Testis (tissue), 5 donors: ENCODE measurements at regions of chr6 and their contacts with region 1.

Region 1: DNA sequence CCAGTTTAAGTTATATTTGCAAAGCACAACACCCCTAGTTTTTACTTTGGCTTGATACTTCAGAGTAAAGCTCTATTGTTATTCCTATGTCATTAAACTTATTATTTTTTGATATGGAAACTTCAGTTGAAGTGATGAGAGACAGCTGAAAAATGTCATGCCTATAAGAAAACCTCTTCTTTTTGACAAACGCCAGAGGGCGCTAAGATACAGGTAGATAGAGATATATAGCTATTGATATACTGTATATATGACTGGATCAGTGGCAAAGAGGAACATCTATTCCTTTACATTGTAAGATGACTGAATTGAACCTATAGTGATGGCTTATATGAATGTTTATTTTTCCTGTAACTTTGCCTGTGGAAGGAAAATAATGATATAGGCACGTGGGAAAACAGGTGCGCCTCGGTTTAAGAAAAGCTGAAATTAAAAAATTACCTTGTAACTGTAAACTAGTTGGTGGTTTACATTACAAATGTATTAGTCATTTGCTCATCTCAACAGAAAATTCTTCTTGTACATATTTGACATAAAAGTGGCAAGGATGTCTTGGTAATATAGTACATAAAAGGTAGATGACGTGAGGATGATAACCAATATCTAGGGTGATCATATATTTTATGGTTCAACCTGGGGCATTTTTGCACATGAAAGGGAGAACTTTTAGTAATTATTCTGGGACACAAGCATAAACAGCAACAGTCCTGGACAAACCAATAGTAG is 74.1 kb downstream of the LAMA4 start:
- DNase-seq: peak; percentile 27
- H3K4me3 ChIP-seq: no peak overlapping the region
- H3K27ac ChIP-seq: no peak overlapping the region
- H3K4me1 ChIP-seq: no peaks in the 10 kb centered on the region
- H3K27me3 ChIP-seq: no peaks in the 10 kb centered on the region
- CTCF ChIP-seq: peak; percentile 46 to 57 (median 54)
- POLR2A ChIP-seq: no peak

Region 2: DNA sequence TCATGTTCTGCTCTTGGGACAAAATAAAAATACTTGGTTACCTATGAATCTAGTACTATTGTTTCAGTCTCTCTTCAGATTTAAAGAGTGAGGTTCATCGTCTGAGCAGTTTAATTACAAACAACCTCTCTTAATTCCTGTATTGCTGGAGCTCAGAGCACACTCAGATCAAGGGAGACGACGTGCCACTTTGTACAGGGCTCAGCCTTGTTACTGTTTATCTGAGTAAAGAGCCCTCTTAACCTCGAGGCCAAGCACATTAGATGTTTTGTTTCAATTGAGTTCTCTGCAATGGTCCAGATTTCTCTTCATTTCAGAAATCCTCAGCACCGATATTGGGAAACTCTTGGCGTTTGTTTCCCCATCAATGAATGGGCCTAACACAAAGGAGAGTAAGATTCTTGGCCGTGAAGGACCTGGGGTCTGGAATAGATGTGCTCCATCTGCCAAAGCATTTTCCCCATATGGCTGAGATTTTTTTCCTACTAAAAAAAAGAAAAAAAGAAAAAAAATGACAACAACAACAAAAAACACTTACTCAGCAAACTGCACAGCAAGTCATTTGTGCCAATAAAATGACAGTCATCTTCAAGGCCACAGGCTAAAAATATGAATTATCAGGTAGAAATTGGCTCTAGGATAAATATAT is 209.0 kb before region 1 on chr6:
- intact Hi-C with region 1: no loop called
- DNase-seq: peak; percentile 21
- H3K4me3 ChIP-seq: no peak overlapping the region
- H3K27ac ChIP-seq: no peak overlapping the region
- H3K4me1 ChIP-seq: peaks cover 7% of the 10 kb centered on the region
- H3K27me3 ChIP-seq: no peaks in the 10 kb centered on the region
- CTCF ChIP-seq: no peak
- POLR2A ChIP-seq: no peak

Region 3: GRCh38 chr6:112296122-112296521 is 115.9 kb after region 1 on chr6:
- intact Hi-C with region 1: loop called (anchors 10 kb)
- DNase-seq: peak; percentile 41
- H3K4me3 ChIP-seq: no peak overlapping the region
- H3K27ac ChIP-seq: no peak overlapping the region
- H3K4me1 ChIP-seq: no peaks in the 10 kb centered on the region
- H3K27me3 ChIP-seq: no peaks in the 10 kb centered on the region
- CTCF ChIP-seq: no peak
- POLR2A ChIP-seq: no peak